ENCODE measurements at regions of chr6 and their contacts with region 1.

Region 1: DNA sequence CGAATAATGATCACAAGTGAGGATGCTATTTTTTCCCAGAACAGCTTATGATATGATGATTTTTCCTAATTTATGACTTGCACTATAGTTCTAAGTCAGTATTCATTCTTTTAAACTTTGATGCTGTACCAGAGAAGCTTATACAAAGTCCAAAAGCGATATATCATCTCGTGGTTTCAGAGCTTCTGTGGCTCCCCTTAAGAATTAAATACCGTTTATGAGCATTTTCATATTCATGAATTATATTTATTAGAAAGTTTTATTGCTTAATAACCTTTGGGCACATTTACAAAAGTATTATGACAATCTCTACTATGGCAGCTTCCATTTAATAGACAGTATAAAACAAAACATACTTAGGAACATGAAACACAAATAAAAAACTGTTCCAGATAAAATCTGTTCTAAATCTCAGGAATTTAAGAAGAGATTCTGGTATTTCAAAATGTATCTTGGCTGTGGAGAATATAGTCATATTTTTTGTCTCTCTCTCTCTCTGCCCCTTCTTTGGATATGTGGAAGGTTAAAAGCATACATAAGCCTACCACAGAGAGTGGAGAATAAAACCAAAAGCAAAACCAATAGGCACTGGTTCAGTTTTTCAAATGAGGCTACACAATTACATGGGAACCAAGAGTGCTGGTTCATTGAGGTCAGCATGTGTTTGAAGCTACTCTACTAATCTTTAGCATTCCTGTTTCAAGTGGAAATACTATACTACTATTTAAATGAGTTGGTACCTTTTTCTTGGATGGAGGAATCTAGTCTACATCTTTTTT is 884.5 kb upstream of the GJE1 start:
- DNase-seq: no peak
- ATAC-seq: no peak
- H3K4me3 ChIP-seq: no peak overlapping the region
- H3K27ac ChIP-seq: no peak overlapping the region
- H3K4me1 ChIP-seq: no peaks in the 10 kb centered on the region
- H3K27me3 ChIP-seq: no peaks in the 10 kb centered on the region
- CTCF ChIP-seq: no peak

Region 2: GRCh38 chr6:140809694-140810101 is 438.5 kb before region 1 on chr6:
- CTCF ChIA-PET with region 1: no interaction called
- POLR2A ChIA-PET with region 1: no interaction called
- in situ Hi-C with region 1: no loop called
- intact Hi-C with region 1: no loop called
- DNase-seq: no peak
- ATAC-seq: no peak
- H3K4me3 ChIP-seq: no peak overlapping the region
- H3K27ac ChIP-seq: no peak overlapping the region
- H3K4me1 ChIP-seq: no peaks in the 10 kb centered on the region; the same call in 1 of the 2 replicates
- H3K27me3 ChIP-seq: no peaks in the 10 kb centered on the region
- CTCF ChIP-seq: no peak

Region 3: DNA sequence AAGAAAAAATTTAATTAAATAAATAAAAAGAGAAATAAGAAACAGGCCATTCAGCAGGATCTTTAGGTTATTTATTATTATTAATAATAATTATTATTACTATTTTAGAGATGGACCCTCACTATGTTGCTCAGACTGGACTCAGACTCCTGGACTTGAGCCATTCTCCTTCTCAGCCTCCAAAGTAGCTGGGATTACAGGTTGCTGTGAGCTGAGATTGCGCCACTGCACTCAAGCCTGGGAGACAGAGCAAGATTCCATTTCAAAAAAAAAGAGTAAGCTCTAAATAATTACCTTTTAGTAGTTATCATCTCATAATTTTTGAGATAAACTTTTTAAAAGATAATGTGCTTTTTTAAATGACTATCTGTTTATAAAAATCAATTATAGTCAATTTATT is 218.3 kb before region 1 on chr6:
- CTCF ChIA-PET with region 1: no interaction called
- POLR2A ChIA-PET with region 1: interaction called, 11 read pairs
- in situ Hi-C with region 1: no loop called
- intact Hi-C with region 1: no loop called
- DNase-seq: no peak
- ATAC-seq: no peak
- H3K4me3 ChIP-seq: no peak overlapping the region
- H3K27ac ChIP-seq: no peak overlapping the region
- H3K4me1 ChIP-seq: no peaks in the 10 kb centered on the region
- H3K27me3 ChIP-seq: no peaks in the 10 kb centered on the region
- CTCF ChIP-seq: no peak

Region 4: GRCh38 chr6:141183368-141183767 is 64.8 kb before region 1 on chr6:
- CTCF ChIA-PET with region 1: no interaction called
- POLR2A ChIA-PET with region 1: no interaction called
- in situ Hi-C with region 1: no loop called
- intact Hi-C with region 1: no loop called
- DNase-seq: no peak
- ATAC-seq: no peak
- H3K4me3 ChIP-seq: no peak overlapping the region
- H3K27ac ChIP-seq: no peak overlapping the region
- H3K4me1 ChIP-seq: no peaks in the 10 kb centered on the region
- H3K27me3 ChIP-seq: no peaks in the 10 kb centered on the region
- CTCF ChIP-seq: no peak